ENCODE measurements at regions of chr10 and their contacts with region 1.

Region 1: DNA sequence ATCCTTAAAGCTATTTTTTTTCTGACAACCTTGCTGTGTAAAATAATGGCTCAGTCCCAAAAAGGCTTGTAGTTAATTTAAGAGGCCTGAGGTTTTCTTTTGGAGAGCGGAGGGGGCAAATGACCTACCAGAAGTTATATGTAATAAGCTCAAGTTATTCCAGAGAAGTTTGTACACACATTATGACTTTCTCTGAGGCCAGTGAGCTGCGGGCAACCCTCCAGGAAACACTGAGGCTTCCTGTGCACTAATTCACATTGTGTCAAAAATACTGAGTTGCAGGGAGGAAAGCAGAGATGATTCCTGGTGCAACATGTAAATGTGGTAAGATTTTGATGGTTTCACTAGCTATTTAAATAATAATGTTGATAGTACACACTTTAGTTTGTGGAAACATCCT is 188.6 kb downstream of the DIP2C start:
- DNase-seq: peak; percentile 59
- ATAC-seq: peak; percentile 54; the same call in 1 of the 2 replicates
- H3K4me3 ChIP-seq: no peak overlapping the region
- H3K27ac ChIP-seq: no peak overlapping the region
- H3K4me1 ChIP-seq: peaks cover 4% of the 10 kb centered on the region; the same call in 1 of the 2 replicates
- H3K27me3 ChIP-seq: no peaks in the 10 kb centered on the region
- CTCF ChIP-seq: no peak
- POLR2A ChIP-seq: no peak
- RAD21 ChIP-seq: no peak

Region 2: GRCh38 chr10:794466-794865 is 293.6 kb after region 1 on chr10:
- CTCF ChIA-PET with region 1: no interaction called
- POLR2A ChIA-PET with region 1: no interaction called
- dilution Hi-C with region 1: no loop called
- in situ Hi-C with region 1: loop called (anchors 10 kb)
- intact Hi-C with region 1: no loop called
- DNase-seq: peak; percentile 48
- ATAC-seq: peak; percentile 69
- H3K4me3 ChIP-seq: no peak overlapping the region
- H3K27ac ChIP-seq: no peak overlapping the region
- H3K4me1 ChIP-seq: peaks cover 8% of the 10 kb centered on the region
- H3K27me3 ChIP-seq: no peaks in the 10 kb centered on the region
- CTCF ChIP-seq: peak; percentile 63
- POLR2A ChIP-seq: no peak
- RAD21 ChIP-seq: peak; percentile 70

Region 3: GRCh38 chr10:1847361-1847760 is 1346.5 kb after region 1 on chr10:
- CTCF ChIA-PET with region 1: no interaction called
- POLR2A ChIA-PET with region 1: no interaction called
- dilution Hi-C with region 1: no loop called
- in situ Hi-C with region 1: no loop called
- intact Hi-C with region 1: no loop called
- DNase-seq: no peak
- ATAC-seq: no peak
- H3K4me3 ChIP-seq: no peak overlapping the region
- H3K27ac ChIP-seq: no peak overlapping the region
- H3K4me1 ChIP-seq: no peaks in the 10 kb centered on the region
- H3K27me3 ChIP-seq: no peaks in the 10 kb centered on the region
- CTCF ChIP-seq: no peak
- POLR2A ChIP-seq: no peak
- RAD21 ChIP-seq: no peak

Measured in IMR-90 (cell line).